HCT116 (cell line): ENCODE measurements at regions of chr6 and their contacts with region 1.

Region 1: GRCh38 chr6:14210663-14211561 is 93.3 kb downstream of the CD83 start:
- DNase-seq: peak; percentile 72
- ATAC-seq: peak; percentile 90
- H3K4me3 ChIP-seq: peak overlapping the region; percentile 63 to 76
- H3K27ac ChIP-seq: peak overlapping the region; percentile 65; the same call in 1 of the 2 replicates
- H3K4me1 ChIP-seq: peaks cover 6 to 25% of the 10 kb centered on the region in 2 experiments
- H3K27me3 ChIP-seq: no peaks in the 10 kb centered on the region
- CTCF ChIP-seq: peak; percentile 22 to 49 (median 41); a peak in 3 of 6 replicates
- POLR2A ChIP-seq: no peak
- RAD21 ChIP-seq: peak; percentile 81

Region 2: DNA sequence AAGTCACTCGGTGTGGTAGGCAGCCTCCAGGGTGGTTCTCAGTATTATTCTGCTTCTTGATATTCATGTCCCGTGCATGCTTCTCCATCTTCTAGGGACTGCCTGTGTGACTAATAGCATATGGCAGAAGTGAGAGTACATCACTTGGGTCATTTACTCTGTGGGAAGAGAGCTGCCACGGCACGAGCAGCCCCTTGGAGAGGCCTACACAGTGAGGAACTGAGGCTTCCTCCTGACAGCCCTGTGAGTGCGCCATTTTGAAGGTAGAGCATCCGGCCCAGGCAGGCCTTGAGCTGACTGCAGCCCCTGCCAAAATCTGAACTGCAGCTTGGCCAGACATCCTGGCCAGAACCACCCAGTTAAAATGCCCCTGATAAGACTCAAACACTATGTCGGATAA is 379.3 kb before region 1 on chr6:
- CTCF ChIA-PET with region 1: no interaction called
- POLR2A ChIA-PET with region 1: no interaction called
- RAD21 ChIA-PET with region 1: no interaction called
- intact Hi-C with region 1: no loop called
- DNase-seq: no peak
- ATAC-seq: no peak
- H3K4me3 ChIP-seq: no peak overlapping the region
- H3K27ac ChIP-seq: no peak overlapping the region
- H3K4me1 ChIP-seq: no peaks in the 10 kb centered on the region
- H3K27me3 ChIP-seq: no peaks in the 10 kb centered on the region
- CTCF ChIP-seq: no peak
- POLR2A ChIP-seq: no peak
- RAD21 ChIP-seq: no peak

Region 3: DNA sequence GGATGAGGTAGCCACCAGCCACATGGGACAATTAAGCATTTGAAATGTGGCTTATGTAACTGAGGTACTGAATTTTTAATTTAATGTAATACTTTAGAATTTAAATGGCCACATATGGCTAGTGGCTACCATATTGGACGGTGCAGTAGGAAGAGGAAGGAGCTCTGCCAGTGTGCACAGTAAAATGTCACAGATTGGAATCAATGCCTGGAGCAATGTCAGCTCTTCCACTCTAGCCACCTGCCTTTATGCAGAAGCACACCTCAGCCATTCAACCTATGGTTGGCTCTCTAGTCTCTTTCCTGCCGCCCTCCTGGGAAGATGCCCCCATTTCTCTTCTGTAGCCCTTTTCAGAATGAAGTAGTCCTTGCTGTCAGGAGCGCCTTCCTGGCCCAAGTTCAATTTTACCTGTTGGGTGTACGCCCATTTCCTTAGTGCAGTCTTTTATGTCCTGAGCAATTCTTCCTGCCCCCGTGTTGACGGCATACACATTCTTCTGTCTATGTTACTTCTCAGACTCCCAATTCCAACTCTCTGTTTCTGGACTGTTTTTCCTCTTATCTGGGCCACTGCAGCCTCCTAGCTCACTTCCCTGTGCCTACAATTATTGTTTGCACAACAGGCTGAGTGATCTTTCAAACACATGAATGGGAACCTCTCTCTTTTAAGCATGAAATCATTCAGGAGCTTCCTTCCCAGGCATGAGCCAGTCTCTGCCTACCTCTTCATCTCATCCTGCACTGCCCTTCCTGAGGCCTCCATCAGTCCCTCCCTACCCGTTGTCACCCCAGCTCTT is 295.7 kb after region 1 on chr6:
- CTCF ChIA-PET with region 1: no interaction called
- POLR2A ChIA-PET with region 1: no interaction called
- RAD21 ChIA-PET with region 1: no interaction called
- intact Hi-C with region 1: loop called (anchors 5 kb)
- DNase-seq: no peak
- ATAC-seq: no peak
- H3K4me3 ChIP-seq: no peak overlapping the region
- H3K27ac ChIP-seq: no peak overlapping the region
- H3K4me1 ChIP-seq: peaks cover 0 to 14% of the 10 kb centered on the region in 2 experiments; a peak in 2 of 4 replicates
- H3K27me3 ChIP-seq: no peaks in the 10 kb centered on the region
- CTCF ChIP-seq: no peak
- POLR2A ChIP-seq: no peak
- RAD21 ChIP-seq: no peak

Region 4: DNA sequence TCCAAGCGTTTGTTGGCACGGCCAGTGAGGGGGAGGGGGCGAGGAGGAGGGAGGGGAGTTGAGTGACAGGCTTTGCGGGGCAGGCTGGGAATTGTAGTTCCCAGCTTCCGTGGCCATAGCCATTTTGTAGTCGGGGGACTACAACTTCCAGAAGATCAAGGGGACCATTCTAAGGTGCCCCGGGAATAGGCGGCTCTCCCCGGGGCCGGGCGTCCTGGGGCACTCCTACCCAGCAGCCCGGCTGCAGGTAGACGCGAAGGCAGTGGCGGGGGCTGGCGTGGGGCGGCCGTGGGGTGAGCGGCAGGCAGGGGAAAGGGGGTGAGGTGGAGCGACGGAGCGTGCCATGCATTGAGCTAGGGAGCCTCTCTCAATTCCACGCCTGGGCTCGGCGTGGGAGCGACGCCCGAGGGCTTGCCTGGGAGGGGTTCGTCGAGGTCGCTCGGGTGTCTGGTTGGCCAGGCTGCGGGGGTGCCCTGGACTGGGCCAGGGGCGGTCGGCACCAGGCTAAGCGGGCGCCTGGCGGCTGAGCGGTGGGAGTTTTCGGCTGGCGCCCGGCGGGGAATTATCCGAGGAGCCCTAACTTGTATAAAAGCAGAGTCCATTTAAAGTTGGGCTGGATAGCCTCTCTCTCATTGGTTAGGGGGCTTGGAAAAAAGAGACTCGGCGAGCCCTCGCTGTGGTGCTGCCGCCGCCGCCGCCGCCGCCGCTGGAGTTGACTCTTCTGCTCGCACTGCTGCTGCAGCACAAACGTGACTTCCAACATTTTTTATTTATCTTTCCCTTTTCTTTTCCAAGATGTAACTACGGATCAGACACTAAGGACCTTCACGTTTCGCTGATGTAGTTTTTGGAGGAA is 1034.7 kb after region 1 on chr6 and contains the start of gene JARID2:
- CTCF ChIA-PET with region 1: no interaction called
- POLR2A ChIA-PET with region 1: no interaction called
- RAD21 ChIA-PET with region 1: no interaction called
- intact Hi-C with region 1: loop called (anchors 10 kb)
- DNase-seq: peak; percentile 95
- ATAC-seq: peak; percentile 76
- H3K4me3 ChIP-seq: peak within 1 kb of the TSS; percentile 72 to 81
- H3K27ac ChIP-seq: peak within 1 kb of the TSS; percentile 88
- H3K4me1 ChIP-seq: peaks cover 7 to 31% of the 10 kb centered on the region in 2 experiments
- H3K27me3 ChIP-seq: no peaks in the 10 kb centered on the region
- CTCF ChIP-seq: no peak
- POLR2A ChIP-seq: peak; percentile 42
- RAD21 ChIP-seq: peak; percentile 36
- total RNA-seq, gene JARID2: 23.6 TPM

Region 5: GRCh38 chr6:15441215-15441868 is 1230.4 kb after region 1 on chr6:
- CTCF ChIA-PET with region 1: no interaction called
- POLR2A ChIA-PET with region 1: no interaction called
- RAD21 ChIA-PET with region 1: no interaction called
- intact Hi-C with region 1: loop called (anchors 5 kb)
- DNase-seq: peak; percentile 19
- ATAC-seq: peak; percentile 85
- H3K4me3 ChIP-seq: no peak overlapping the region
- H3K27ac ChIP-seq: no peak overlapping the region
- H3K4me1 ChIP-seq: peaks cover 11 to 27% of the 10 kb centered on the region in 2 experiments
- H3K27me3 ChIP-seq: no peaks in the 10 kb centered on the region
- CTCF ChIP-seq: peak; percentile 48 to 79 (median 77); a peak in 5 of 6 replicates
- POLR2A ChIP-seq: no peak
- RAD21 ChIP-seq: peak; percentile 75

Region 6: DNA sequence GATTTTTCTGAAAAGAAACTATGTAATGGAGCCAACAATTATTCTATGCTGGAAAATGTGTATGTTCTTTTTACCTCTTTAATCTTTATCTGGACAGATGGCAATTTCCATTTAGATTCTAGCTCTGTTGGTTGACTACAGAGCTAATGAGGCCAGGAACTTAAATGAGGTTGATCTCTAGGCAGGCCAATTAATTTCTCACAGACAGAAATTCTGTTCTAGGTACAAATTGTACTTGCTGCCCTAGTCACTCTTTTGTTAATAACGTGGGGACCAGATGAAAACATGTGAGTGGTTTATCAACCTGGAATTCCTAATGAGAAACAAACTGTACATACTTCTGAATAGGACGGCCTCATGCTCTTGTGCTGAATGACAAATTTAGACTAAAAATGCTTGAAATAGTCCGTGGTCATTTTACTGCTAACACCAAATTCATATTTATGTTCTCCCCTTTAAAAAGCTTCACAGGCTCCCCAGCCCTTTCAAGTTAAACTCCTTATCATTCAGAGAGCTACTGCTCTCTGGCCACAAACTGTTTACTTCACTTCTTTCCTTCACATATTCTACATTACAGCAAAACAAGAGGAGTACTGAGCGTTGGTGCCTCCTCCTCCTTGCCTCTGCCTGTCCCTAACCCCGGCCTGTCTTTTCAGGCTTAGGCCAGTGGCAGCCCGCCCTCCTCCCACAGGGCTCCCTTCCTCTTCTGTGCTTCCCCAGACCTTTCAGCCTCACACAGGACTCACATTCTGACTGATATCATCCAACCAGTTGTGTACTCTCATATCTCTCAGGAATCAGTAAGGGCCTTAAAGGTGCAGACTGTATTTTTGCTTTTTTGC is 1410.5 kb after region 1 on chr6:
- CTCF ChIA-PET with region 1: no interaction called
- POLR2A ChIA-PET with region 1: no interaction called
- RAD21 ChIA-PET with region 1: no interaction called
- intact Hi-C with region 1: loop called (anchors 2 kb)
- DNase-seq: no peak
- ATAC-seq: no peak
- H3K4me3 ChIP-seq: no peak overlapping the region
- H3K27ac ChIP-seq: no peak overlapping the region
- H3K4me1 ChIP-seq: no peaks in the 10 kb centered on the region
- H3K27me3 ChIP-seq: no peaks in the 10 kb centered on the region
- CTCF ChIP-seq: no peak
- POLR2A ChIP-seq: no peak
- RAD21 ChIP-seq: no peak